ENCODE measurements at regions of chr2 and their contacts with region 1.

Region 1: DNA sequence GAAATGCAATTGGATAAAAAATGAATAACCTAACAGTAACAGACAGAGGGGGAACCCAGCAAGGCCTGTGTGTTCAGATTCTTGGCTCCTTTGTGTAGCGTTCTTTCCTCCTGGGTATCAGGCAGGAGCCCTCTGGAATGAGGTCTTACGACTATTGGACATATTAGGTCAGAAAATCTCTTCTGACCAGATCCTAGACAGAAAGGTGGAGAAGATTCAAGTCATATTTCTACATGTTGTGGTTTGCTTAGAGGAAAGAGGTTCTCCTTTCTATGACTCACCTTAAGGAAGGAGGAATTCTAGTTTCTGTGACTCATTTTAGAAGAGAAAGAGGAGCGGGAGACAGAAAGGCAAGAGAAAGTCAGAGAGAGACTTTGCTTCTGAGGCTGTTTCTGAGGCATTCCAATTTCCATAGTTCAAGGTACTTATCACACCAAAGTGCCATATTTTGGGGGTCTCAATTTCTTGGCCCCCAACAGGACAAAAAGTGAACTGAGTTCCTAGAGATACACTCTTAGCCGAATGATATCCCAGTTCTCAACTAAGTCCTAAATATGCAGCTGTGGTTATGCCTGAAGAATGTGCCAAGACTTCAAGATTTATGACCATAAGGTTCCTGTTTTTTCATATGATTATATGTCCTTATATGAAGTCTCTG is 618.6 kb downstream of the ZEB2 start:
- DNase-seq: peak; percentile 69 to 96
- H3K4me3 ChIP-seq: peak overlapping the region; percentile 39; the same call in 1 of the 2 replicates
- H3K27ac ChIP-seq: peak overlapping the region; percentile 85
- H3K4me1 ChIP-seq: peaks cover 18% of the 10 kb centered on the region
- H3K27me3 ChIP-seq: no peaks in the 10 kb centered on the region
- CTCF ChIP-seq: no peak

Region 2: GRCh38 chr2:143745060-143745459 is 156.3 kb before region 1 on chr2:
- CTCF ChIA-PET with region 1: no interaction called
- POLR2A ChIA-PET with region 1: no interaction called
- intact Hi-C with region 1: loop called (anchors 5 kb)
- DNase-seq: peak; percentile 38 to 57
- H3K4me3 ChIP-seq: no peak overlapping the region
- H3K27ac ChIP-seq: no peak overlapping the region
- H3K4me1 ChIP-seq: no peaks in the 10 kb centered on the region
- H3K27me3 ChIP-seq: no peaks in the 10 kb centered on the region
- CTCF ChIP-seq: no peak

Region 3: DNA sequence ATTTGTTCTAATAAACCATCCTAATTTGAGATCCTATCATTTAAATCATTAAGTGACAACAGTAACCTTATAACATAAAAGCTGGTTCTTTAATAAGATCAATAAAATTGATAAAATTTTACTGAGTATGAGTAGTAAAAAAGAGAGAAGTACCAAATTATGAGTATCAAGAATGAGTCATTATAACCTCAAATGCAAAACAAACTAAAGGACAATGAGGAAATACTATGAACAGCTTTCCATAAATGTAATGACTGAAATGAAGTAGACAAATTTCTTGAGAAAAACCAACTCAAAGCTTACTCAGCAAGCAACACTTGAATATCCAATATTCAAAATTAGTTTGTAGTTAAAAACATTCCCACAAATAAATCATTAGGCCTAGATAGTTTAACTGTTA is 185.7 kb after region 1 on chr2:
- CTCF ChIA-PET with region 1: no interaction called
- POLR2A ChIA-PET with region 1: no interaction called
- intact Hi-C with region 1: no loop called
- DNase-seq: no peak
- H3K4me3 ChIP-seq: no peak overlapping the region
- H3K27ac ChIP-seq: no peak overlapping the region
- H3K4me1 ChIP-seq: no peaks in the 10 kb centered on the region
- H3K27me3 ChIP-seq: no peaks in the 10 kb centered on the region
- CTCF ChIP-seq: no peak

Region 4: GRCh38 chr2:144357623-144358373 is 456.5 kb after region 1 on chr2:
- CTCF ChIA-PET with region 1: no interaction called
- POLR2A ChIA-PET with region 1: no interaction called
- intact Hi-C with region 1: loop called (anchors 1 kb)
- DNase-seq: peak; percentile 65 to 95
- H3K4me3 ChIP-seq: no peak overlapping the region
- H3K27ac ChIP-seq: peak overlapping the region; percentile 63
- H3K4me1 ChIP-seq: peaks cover 31% of the 10 kb centered on the region
- H3K27me3 ChIP-seq: no peaks in the 10 kb centered on the region
- CTCF ChIP-seq: no peak

Measured in PC-9 (cell line).